ENCODE measurements at regions of chr15 and their contacts with region 1.

Region 1: DNA sequence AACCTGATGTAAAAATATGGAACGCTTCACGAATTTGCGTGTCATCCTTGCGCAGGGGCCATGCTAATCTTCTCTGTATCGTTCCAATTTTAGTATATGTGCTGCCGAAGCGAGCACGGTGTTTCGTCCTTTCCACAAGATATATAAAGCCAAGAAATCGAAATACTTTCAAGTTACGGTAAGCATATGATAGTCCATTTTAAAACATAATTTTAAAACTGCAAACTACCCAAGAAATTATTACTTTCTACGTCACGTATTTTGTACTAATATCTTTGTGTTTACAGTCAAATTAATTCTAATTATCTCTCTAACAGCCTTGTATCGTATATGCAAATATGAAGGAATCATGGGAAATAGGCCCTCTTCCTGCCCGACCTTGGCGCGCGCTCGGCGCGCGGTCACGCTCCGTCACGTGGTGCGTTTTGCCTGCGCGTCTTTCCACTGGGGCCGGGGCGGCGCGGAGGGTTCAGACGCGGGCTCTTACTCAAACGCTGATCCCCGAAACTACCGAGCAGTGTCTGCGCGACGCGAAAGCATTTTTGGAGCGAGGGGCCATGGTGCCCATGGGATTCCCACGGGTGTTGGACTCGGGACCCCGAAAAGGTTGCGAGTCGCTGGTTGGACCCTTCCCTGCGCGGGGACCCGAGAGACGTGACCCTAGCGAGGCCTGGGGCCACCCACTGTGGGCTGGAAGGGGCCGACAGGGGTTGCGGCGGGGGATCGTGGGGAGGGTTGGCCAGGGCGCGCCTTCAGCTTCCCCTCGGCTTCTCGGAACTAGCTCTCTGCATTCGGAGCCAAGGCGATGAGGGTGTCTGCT is at the start of gene RNU6-1:
- DNase-seq: peak; percentile 99
- H3K4me3 Mint-ChIP-seq: peak within 1 kb of the TSS; percentile 95
- H3K27ac Mint-ChIP-seq: peak within 1 kb of the TSS; percentile 98
- H3K4me1 Mint-ChIP-seq: peaks cover 27% of the 10 kb centered on the region
- H3K27me3 Mint-ChIP-seq: peaks cover 35% of the 10 kb centered on the region
- total RNA-seq, gene RNU6-1: not detected in 2 replicates

Region 2: GRCh38 chr15:66700802-66701421 is 1139.2 kb before region 1 on chr15:
- intact Hi-C with region 1: loop called (anchors 10 kb)
- DNase-seq: peak; percentile 96
- H3K4me3 Mint-ChIP-seq: peak overlapping the region; percentile 90
- H3K27ac Mint-ChIP-seq: peak overlapping the region; percentile 78
- H3K4me1 Mint-ChIP-seq: peaks cover 19% of the 10 kb centered on the region
- H3K27me3 Mint-ChIP-seq: peaks cover 24% of the 10 kb centered on the region

Region 3: DNA sequence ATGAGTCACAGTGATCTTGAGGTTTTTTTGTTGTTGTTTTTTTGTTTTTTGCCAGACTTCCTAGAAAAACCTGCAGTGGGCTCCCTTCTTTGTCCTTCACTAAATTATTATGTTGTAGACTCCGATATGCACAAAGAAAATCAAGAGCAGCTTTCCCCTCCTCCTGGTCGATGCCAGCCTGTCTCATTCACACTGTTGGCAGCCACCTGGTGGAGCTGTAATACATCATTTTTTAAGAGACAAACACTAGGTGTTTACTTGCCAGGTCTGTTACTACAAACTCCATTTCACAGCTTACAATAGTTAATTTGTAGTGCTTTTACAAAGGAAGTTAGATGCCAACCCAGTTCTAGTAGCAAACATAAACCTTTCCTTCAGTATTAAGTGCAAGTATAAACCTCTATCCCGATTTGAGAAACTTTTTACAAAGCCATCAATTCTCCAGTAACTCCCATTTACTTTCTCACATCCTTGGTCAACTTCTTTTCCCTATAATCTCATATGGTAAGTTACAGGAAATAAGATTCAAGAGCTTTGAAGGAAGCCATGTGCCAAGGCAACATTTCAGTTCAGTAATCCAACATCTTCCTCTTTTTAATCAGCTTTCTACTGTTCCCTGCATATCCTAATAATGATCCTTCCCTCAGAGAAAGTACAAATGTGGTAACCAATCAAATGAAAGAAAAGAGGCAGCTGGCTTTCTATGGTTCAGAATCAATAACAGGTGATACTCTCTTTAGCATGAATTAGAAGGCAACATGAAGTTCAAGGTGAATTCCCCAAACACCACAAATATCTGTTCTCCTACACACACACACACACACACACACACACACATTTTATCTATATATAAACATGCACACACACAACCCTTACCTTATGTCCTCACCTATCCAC is 599.7 kb before region 1 on chr15:
- intact Hi-C with region 1: loop called (anchors 5 kb)
- DNase-seq: peak; percentile 72
- H3K4me3 Mint-ChIP-seq: peak overlapping the region; percentile 80
- H3K27ac Mint-ChIP-seq: peak overlapping the region; percentile 91
- H3K4me1 Mint-ChIP-seq: peaks cover 44% of the 10 kb centered on the region
- H3K27me3 Mint-ChIP-seq: no peaks in the 10 kb centered on the region

Region 4: GRCh38 chr15:67521029-67521811 is 318.9 kb before region 1 on chr15 and contains the start of gene C15orf61:
- intact Hi-C with region 1: loop called (anchors 2 kb)
- DNase-seq: peak; percentile 96
- H3K4me3 Mint-ChIP-seq: peak within 1 kb of the TSS; percentile 98
- H3K27ac Mint-ChIP-seq: peak within 1 kb of the TSS; percentile 99
- H3K4me1 Mint-ChIP-seq: peaks cover 25% of the 10 kb centered on the region
- H3K27me3 Mint-ChIP-seq: no peaks in the 10 kb centered on the region
- total RNA-seq, gene C15orf61: 4.7 and 7.3 TPM in 2 replicates

Region 5: DNA sequence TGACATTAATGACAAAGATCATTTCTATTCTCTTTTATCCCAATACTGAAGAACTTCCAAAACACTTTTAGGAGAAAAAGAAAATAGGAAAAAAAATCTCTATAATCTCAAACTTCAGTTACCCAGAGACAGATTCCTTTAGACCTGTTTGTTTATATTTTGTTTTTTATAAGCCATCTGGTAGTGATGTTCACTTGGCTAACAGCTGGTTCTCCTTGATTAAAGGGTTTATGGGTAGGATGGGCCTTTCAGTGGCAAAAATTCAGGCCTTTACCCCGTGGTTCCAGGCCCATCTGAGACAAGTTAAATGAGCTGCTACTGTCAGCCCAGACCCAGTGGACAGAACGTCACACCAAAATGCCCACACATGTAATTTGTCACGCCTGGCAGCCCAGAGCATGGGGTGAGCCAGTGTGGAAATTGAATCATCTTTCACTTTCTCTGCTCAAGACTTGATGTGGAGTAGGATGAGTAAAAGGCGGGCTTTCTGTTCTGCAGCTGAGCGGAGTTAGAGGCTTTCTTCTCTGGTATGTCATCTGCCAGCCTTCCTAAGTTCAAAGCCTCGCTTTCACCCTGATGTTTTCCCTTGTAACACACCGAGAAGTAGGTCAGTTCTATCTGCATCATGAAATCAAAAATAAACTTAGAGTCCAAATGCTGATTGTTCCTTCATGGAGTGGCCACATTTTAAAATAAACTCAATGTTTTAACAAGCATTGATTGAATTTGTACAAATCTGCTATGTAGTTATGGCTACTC is 77.3 kb before region 1 on chr15:
- intact Hi-C with region 1: loop called (anchors 5 kb)
- DNase-seq: peak; percentile 84
- H3K4me3 Mint-ChIP-seq: peak overlapping the region; percentile 41
- H3K27ac Mint-ChIP-seq: peak overlapping the region; percentile 59
- H3K4me1 Mint-ChIP-seq: peaks cover 45% of the 10 kb centered on the region
- H3K27me3 Mint-ChIP-seq: no peaks in the 10 kb centered on the region

Measured in activated CD4-positive, alpha-beta T cell treated with anti-CD3 and anti-CD28 coated beads, Interleukin-2, amount 10 ng/mL, durations not matched to agents 24 days and 14 days (primary cell).